Activated T-helper 1 cell treated with anti-CD3 and anti-CD28 coated beads, Interleukin-12 subunit alpha, Interleukin-12 subunit beta, Interleukin-2, Interleukin-4 antibody, amounts not matched to agents 30 ng/mL and 10 ng/mL and 1 ng/mL, durations not matched to agents 14 hours and 24 hours and 36 hours (primary cell): ENCODE measurements at regions of chr3 and their contacts with region 1.

Region 1: DNA sequence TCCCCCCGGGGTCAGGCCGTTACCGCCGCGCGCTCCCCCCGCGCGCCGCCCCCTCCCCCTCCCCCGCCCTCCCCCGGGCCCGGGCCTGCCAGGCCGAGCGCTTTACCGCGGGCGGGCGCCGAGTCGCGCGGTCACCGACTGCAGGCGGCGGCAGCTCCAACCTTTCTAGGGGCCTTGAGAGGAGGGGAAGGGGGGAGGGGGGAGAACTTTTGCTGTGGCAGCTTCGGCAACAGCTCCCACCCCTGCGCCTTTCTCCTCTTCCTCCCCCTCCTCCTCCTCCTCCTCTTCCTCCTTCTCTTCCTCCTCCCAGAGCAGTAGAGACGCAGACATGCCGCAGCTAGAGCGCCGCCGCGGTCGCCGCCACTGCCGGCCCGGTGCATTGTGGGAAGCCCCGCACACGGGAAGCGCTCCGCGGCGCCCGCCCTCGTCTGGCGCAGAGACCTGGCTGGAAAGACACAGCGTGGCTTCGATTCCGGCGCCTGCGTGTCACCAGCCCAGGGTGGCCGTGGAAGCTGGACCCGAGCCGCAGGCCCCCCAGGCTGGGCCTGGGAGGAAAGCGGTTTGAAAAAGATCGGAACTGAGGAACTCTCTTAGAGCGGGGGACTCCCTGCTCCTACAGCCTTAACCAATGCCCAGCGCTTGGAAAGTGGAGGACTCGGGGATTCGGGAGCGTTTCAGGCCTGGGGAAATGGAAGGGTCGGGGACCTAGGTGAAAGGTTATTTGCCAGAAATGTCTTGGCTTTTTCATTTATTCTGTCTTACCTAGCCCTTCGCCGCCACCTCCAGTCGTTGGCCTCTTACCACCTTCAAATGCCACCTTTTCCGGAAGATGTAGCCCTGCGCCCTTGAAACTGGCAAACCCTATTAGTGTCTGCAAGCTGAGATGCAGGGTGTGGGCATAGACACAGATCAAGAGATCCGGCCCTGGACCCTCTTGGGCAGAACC is at the start of gene ZNF148:
- DNase-seq: peak; percentile 91
- H3K4me3 Mint-ChIP-seq: peak within 1 kb of the TSS; percentile 99
- H3K27ac Mint-ChIP-seq: peak within 1 kb of the TSS; percentile 95
- H3K4me1 Mint-ChIP-seq: peaks cover 33% of the 10 kb centered on the region
- H3K27me3 Mint-ChIP-seq: no peaks in the 10 kb centered on the region
- total RNA-seq, gene ZNF148: 34.7 and 38.5 TPM in 2 replicates

Region 2: DNA sequence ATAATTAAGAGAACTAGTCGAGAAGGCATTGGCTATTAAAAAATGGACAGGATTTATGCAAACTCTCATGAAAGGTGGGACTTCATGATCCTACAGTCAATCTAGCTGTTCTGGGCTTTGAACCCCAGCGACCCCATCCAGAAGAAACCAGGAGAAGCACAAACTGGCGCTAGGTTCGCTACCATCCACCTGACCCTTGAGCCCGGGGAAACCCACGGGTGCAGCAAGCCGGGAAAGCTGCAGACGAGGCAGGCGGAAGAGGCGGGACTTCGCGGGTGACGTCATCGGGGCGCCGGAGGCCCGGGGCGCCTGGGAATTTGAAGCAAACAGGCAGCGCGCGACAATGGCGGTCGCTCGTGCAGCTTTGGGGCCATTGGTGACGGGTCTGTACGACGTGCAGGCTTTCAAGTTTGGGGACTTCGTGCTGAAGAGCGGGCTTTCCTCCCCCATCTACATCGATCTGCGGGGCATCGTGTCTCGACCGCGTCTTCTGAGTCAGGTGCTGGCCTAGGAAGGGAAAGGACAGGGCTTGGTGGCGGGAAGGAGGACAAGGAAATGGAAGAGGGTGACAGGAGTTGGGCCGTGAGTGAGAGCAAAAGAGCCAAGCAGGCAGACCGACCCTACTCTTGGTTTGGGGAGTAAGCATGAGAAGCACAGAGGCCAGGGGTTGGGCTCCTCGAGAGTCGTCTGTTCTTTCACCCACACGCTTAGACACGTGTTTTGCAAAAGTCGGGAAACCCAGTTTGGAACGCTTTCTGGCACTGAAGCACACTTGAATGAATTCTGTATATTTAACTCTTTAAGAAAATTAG is 644.9 kb before region 1 on chr3 and contains the start of gene UMPS:
- intact Hi-C with region 1: loop called (anchors 10 kb)
- DNase-seq: peak; percentile 89
- H3K4me3 Mint-ChIP-seq: peak within 1 kb of the TSS; percentile 100
- H3K27ac Mint-ChIP-seq: peak within 1 kb of the TSS; percentile 100
- H3K4me1 Mint-ChIP-seq: peaks cover 41% of the 10 kb centered on the region
- H3K27me3 Mint-ChIP-seq: peaks cover 23% of the 10 kb centered on the region
- total RNA-seq, gene UMPS: 54.2 and 56.3 TPM in 2 replicates

Region 3: DNA sequence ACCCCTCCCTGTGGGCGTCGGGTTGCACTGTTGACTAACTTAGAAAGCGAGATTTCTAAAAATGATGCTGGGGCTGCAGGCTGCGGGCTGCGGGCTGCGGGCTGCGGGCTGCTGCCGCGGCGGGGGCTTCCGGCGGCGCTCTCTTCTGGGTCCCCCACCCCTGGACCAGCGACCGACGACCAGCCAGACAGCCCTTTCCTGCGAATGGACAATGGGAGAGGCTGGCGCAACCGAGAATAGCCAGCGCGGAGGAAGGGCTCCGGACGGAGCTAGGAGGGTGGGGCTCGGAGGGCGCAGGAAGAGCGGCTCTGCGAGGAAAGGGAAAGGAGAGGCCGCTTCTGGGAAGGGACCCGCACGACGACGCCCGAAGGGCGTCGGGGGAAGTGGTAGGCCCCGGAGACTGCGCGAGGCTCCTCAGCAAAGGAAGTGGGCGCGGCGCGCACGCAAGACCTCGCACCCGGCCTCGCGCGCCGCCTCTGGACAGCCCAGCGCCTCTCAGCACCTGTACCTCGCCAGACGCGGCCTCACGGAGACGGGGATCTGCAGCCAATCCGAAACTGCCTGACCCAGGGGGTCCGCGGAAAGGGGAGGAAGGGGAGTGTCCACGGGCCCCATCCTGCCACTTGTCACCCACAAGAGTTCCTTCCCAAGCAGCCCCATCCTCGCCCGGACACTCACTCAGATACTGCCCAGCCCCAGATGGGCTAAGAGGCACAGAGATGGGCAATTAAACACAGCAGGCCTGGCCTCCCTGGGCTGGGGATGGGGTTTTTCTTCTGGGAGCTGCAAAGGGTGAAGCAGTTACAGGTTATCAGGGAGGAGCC is 233.5 kb before region 1 on chr3:
- intact Hi-C with region 1: loop called (anchors 1 kb)
- DNase-seq: peak; percentile 69
- H3K4me3 Mint-ChIP-seq: peak overlapping the region; percentile 76
- H3K27ac Mint-ChIP-seq: peak overlapping the region; percentile 81
- H3K4me1 Mint-ChIP-seq: peaks cover 61% of the 10 kb centered on the region
- H3K27me3 Mint-ChIP-seq: peaks cover 34% of the 10 kb centered on the region

Region 4: GRCh38 chr3:125231895-125232294 is 143.4 kb before region 1 on chr3:
- intact Hi-C with region 1: loop called (anchors 5 kb)
- DNase-seq: no peak
- H3K4me3 Mint-ChIP-seq: no peak overlapping the region
- H3K27ac Mint-ChIP-seq: peak overlapping the region; percentile 58
- H3K4me1 Mint-ChIP-seq: peaks cover 23% of the 10 kb centered on the region
- H3K27me3 Mint-ChIP-seq: no peaks in the 10 kb centered on the region

Region 5: DNA sequence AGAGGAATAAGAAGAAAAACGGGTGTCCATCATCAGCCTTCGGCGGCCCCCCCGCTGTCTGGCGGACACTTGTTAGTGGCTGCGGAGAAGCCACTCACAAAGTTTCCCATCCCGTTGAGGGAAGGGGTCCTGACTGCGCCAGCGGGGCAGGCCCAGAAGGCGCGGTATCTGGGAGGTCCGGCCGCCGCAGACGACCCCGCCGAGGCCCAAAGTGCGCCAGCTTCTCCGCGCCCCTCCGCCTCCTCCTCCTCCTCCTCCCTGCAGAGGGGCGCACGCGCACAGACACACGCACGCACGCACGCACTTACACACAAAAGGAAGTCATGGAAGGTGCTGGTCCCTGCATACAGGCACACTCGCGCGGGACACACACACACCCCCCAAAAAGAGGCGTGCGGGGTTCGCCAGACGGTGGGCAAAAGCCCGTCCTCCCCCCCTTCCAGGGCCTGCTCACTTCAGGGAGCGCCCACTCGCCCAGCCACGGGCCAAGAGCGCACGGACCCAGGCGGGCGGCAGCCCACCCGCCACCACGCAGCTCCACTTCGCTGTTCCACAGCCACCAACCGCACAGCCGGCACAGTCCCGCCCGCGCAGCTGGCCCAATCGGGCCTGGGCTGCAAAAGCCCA is 18.1 kb before region 1 on chr3:
- intact Hi-C with region 1: loop called (anchors 1 kb)
- DNase-seq: peak; percentile 12
- H3K4me3 Mint-ChIP-seq: peak overlapping the region; percentile 84
- H3K27ac Mint-ChIP-seq: no peak overlapping the region
- H3K4me1 Mint-ChIP-seq: peaks cover 53% of the 10 kb centered on the region
- H3K27me3 Mint-ChIP-seq: no peaks in the 10 kb centered on the region

Region 6: GRCh38 chr3:125519678-125520589 is 144.7 kb after region 1 on chr3 and contains the start of gene SNX4:
- intact Hi-C with region 1: loop called (anchors 2 kb)
- DNase-seq: peak; percentile 85
- H3K4me3 Mint-ChIP-seq: peak within 1 kb of the TSS; percentile 98
- H3K27ac Mint-ChIP-seq: peak within 1 kb of the TSS; percentile 74
- H3K4me1 Mint-ChIP-seq: peaks cover 28% of the 10 kb centered on the region
- H3K27me3 Mint-ChIP-seq: no peaks in the 10 kb centered on the region
- total RNA-seq, gene SNX4: 40.7 and 44.4 TPM in 2 replicates

Region 7: GRCh38 chr3:125916376-125916978 is 541.2 kb after region 1 on chr3:
- intact Hi-C with region 1: loop called (anchors 5 kb)
- DNase-seq: peak; percentile 93
- H3K4me3 Mint-ChIP-seq: peak overlapping the region; percentile 86
- H3K27ac Mint-ChIP-seq: peak overlapping the region; percentile 83
- H3K4me1 Mint-ChIP-seq: peaks cover 24% of the 10 kb centered on the region
- H3K27me3 Mint-ChIP-seq: peaks cover 4% of the 10 kb centered on the region

Region 8: GRCh38 chr3:126540342-126540849 is 1165.1 kb after region 1 on chr3:
- intact Hi-C with region 1: no loop called
- DNase-seq: no peak
- H3K4me3 Mint-ChIP-seq: no peak overlapping the region
- H3K27ac Mint-ChIP-seq: no peak overlapping the region
- H3K4me1 Mint-ChIP-seq: peaks cover 16% of the 10 kb centered on the region
- H3K27me3 Mint-ChIP-seq: peaks cover 3% of the 10 kb centered on the region